Naive thymus-derived CD4-positive, alpha-beta T cell (primary cell): ENCODE measurements at regions of chr19 and their contacts with region 1.

Region 1: GRCh38 chr19:49676690-49677231 is 310 bp upstream of the PRMT1 start:
- DNase-seq: peak; percentile 84 to 99 (median 97)
- ATAC-seq: peak; percentile 87
- H3K4me3 ChIP-seq: peak overlapping the region; percentile 86
- H3K4me3 Mint-ChIP-seq: peak overlapping the region; percentile 91 to 100 (median 98)
- H3K27ac ChIP-seq: peak overlapping the region; percentile 95
- H3K27ac Mint-ChIP-seq: peak overlapping the region; percentile 93 to 100 (median 99)
- H3K4me1 ChIP-seq: peaks cover 18 to 23% of the 10 kb centered on the region in 2 donors
- H3K4me1 Mint-ChIP-seq: peaks cover 18 to 50% (median 43%) of the 10 kb centered on the region in 7 donors
- H3K27me3 ChIP-seq: no peaks in the 10 kb centered on the region
- H3K27me3 Mint-ChIP-seq: no peaks in the 10 kb centered on the region

Region 2: DNA sequence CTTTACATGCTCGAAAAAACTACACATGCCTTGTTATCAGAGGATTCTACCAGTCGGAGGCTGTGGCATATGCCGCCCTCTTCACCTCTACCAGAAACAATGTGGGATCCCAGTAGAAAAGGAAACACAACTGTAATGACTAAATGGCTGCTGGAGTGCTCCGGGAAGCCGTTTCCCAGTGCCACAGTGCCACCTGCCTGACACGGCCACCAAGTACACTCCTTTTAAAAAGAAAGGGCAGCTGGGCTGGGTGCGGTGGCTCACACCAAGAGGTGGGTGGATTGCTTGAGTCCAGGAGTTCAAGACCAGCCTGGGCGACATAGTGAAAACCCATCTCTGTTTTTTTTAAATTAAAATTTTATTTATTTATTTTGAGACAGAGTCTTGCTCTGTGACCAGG is 451.9 kb before region 1 on chr19:
- CTCF ChIA-PET with region 1: interaction called, 7 read pairs
- POLR2A ChIA-PET with region 1: no interaction called
- intact Hi-C with region 1: loop called in 1 of 2 experiments (anchors 1 kb)
- DNase-seq: peak in 3 of 9 donors; percentile 15 to 33 (median 24)
- ATAC-seq: peak; percentile 56
- H3K4me3 ChIP-seq: no peak overlapping the region
- H3K4me3 Mint-ChIP-seq: no peak overlapping the region
- H3K27ac ChIP-seq: no peak overlapping the region
- H3K27ac Mint-ChIP-seq: no peak overlapping the region
- H3K4me1 ChIP-seq: peaks cover 4 to 9% of the 10 kb centered on the region in 2 donors
- H3K4me1 Mint-ChIP-seq: peaks cover 5 to 7% (median 6%) of the 10 kb centered on the region in 7 donors
- H3K27me3 ChIP-seq: no peaks in the 10 kb centered on the region
- H3K27me3 Mint-ChIP-seq: peaks cover 2 to 6% (median 4%) of the 10 kb centered on the region in 5 donors

Region 3: GRCh38 chr19:49443366-49444099 is 233.2 kb before region 1 on chr19:
- CTCF ChIA-PET with region 1: interaction called, 6 read pairs
- POLR2A ChIA-PET with region 1: interaction called, 3 read pairs
- intact Hi-C with region 1: loop called in 1 of 2 experiments (anchors 1 kb)
- DNase-seq: peak; percentile 90 to 98 (median 95)
- ATAC-seq: peak; percentile 96
- H3K4me3 ChIP-seq: peak overlapping the region; percentile 57
- H3K4me3 Mint-ChIP-seq: peak overlapping the region; percentile 75 to 88 (median 83)
- H3K27ac ChIP-seq: peak overlapping the region; percentile 51
- H3K27ac Mint-ChIP-seq: peak overlapping the region; percentile 59 to 91 (median 83)
- H3K4me1 ChIP-seq: peaks cover 12 to 15% of the 10 kb centered on the region in 2 donors
- H3K4me1 Mint-ChIP-seq: peaks cover 29 to 54% (median 37%) of the 10 kb centered on the region in 7 donors
- H3K27me3 ChIP-seq: peaks cover 23 to 32% of the 10 kb centered on the region in 2 donors
- H3K27me3 Mint-ChIP-seq: peaks cover 36 to 48% (median 39%) of the 10 kb centered on the region in 5 donors

Region 4: DNA sequence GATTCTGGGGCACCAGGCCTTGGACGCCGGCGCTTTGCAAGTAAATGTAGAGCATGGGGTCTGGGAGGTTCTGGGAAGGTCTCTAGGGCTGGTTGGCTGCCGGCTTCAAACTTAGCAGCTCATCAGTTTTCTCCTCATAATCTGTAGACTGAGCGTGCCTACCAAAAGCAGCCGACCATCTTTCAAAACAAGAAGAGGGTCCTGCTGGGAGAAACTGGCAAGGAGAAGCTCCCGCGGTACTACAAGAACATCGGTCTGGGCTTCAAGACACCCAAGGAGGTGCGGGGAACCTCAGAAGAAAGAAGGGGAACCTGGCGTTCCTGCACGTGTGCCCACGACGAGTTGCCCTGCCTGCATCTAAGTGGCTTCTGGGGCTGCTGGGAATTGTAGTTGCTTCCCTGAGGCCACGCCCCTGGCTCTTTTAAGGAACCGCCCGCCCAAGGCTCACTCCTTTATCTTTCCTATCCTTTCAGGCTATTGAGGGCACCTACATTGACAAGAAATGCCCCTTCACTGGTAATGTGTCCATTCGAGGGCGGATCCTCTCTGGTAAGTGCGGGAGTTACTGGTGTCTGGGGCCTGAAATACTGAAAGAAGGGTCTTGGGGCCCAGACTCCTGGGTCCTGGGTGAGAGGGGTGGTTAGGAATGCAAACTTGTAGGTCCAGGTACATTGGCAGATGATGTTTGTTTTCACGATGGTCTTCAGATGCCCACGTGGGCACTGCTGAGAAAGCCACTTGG is 179.5 kb before region 1 on chr19:
- CTCF ChIA-PET with region 1: interaction called, 4 read pairs
- POLR2A ChIA-PET with region 1: interaction called, 14 read pairs
- intact Hi-C with region 1: loop called in 1 of 2 experiments (anchors 2 kb)
- DNase-seq: peak; percentile 55 to 85 (median 77)
- ATAC-seq: peak; percentile 20
- H3K4me3 ChIP-seq: peak overlapping the region; percentile 97
- H3K4me3 Mint-ChIP-seq: peak overlapping the region; percentile 96 to 100 (median 99)
- H3K27ac ChIP-seq: peak overlapping the region; percentile 99
- H3K27ac Mint-ChIP-seq: peak overlapping the region; percentile 91 to 100 (median 98)
- H3K4me1 ChIP-seq: peaks cover 21 to 40% of the 10 kb centered on the region in 2 donors
- H3K4me1 Mint-ChIP-seq: peaks cover 32 to 64% (median 50%) of the 10 kb centered on the region in 7 donors
- H3K27me3 ChIP-seq: no peaks in the 10 kb centered on the region
- H3K27me3 Mint-ChIP-seq: peaks cover 0 to 12% (median 0%) of the 10 kb centered on the region in 5 donors

Region 5: DNA sequence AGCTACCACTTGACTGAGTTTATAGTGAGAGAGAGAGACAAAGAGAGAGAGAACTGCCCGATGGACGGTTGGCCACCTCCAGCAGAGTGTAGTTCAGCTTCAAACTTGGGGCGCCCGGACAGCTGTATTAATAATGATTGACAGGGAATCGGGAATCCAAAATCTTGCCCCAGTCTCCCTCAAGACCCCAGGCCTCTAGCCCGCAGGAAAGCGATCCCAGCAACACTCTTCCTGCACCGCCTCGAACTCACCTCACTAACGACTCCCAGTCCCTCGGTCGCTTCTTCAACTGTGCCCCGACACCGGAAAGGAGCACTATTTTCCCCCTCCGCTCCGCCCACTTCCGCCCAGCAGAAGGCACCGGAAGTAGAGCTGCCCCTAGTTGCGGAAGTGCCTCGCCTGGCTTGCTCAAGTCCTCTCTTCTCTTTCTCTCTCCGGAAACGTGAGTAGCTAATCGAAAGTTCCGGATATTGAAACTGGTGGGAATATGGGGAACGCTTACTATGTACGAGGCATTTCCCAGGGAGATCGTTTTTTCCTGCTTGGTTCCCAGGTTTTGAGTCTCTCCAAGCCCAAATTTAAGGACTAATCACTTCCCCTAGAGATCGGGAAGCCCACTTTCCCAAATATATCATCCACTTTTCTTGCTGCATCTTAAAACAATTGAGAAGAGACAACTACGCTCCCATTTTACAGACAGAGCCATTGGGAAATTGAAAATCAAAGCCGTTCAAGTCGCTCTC is 96.3 kb before region 1 on chr19 and contains the start of gene NOSIP:
- CTCF ChIA-PET with region 1: no interaction called
- POLR2A ChIA-PET with region 1: interaction called, 10 read pairs
- intact Hi-C with region 1: loop called in 1 of 2 experiments (anchors 1 kb)
- DNase-seq: peak; percentile 88 to 96 (median 94)
- ATAC-seq: peak; percentile 100
- H3K4me3 ChIP-seq: peak within 1 kb of the TSS; percentile 68
- H3K4me3 Mint-ChIP-seq: peak within 1 kb of the TSS; percentile 91 to 98 (median 94)
- H3K27ac ChIP-seq: peak within 1 kb of the TSS; percentile 84
- H3K27ac Mint-ChIP-seq: peak within 1 kb of the TSS; percentile 85 to 98 (median 92)
- H3K4me1 ChIP-seq: peaks cover 0 to 22% of the 10 kb centered on the region in 2 donors
- H3K4me1 Mint-ChIP-seq: peaks cover 20 to 49% (median 36%) of the 10 kb centered on the region in 7 donors
- H3K27me3 ChIP-seq: no peaks in the 10 kb centered on the region
- H3K27me3 Mint-ChIP-seq: no peaks in the 10 kb centered on the region
- total RNA-seq, gene NOSIP: 222 to 267 (median 228) TPM

Region 6: DNA sequence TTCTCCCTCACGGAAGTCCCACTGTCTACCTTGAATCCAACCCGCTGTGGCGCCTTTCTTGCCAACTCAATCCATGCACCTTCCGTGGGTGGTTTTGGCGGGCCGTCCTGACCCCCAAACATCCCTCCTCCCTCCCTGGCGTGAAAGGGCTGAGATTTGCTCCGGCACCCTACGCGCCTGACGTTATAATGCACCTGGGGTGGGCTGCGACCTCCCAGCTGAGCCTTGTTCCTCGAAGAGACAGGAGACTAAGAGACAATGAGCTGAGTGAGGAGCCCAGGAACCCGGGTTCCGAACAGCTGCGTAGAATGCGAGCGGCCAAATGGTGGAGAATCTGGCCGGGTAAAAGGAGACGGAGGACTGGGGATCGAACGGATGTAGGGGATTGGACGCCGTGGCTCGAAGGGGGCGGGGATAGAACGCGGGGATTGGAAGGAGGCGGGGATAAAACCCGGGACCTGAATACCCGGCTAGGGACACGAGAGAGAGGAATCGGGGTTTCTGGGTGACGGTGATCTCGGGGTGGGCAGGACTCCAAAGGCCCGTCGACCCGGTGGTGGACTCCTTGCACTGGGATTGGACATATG is 14.0 kb after region 1 on chr19 and contains the start of gene CPT1C:
- CTCF ChIA-PET with region 1: interaction called, 7 read pairs
- POLR2A ChIA-PET with region 1: interaction called, 4 read pairs
- intact Hi-C with region 1: loop called in 1 of 2 experiments (anchors 1 kb)
- DNase-seq: peak in 7 of 9 donors; percentile 31 to 65 (median 46)
- ATAC-seq: peak; percentile 71
- H3K4me3 ChIP-seq: peak within 1 kb of the TSS; percentile 45
- H3K4me3 Mint-ChIP-seq: peak within 1 kb of the TSS; percentile 82 to 98 (median 86)
- H3K27ac ChIP-seq: peak within 1 kb of the TSS; percentile 44
- H3K27ac Mint-ChIP-seq: peak within 1 kb of the TSS; percentile 6 to 84 (median 45)
- H3K4me1 ChIP-seq: peaks cover 4 to 12% of the 10 kb centered on the region in 2 donors
- H3K4me1 Mint-ChIP-seq: peaks cover 19 to 38% (median 25%) of the 10 kb centered on the region in 7 donors
- H3K27me3 ChIP-seq: no peaks in the 10 kb centered on the region
- H3K27me3 Mint-ChIP-seq: peaks cover 5 to 15% (median 9%) of the 10 kb centered on the region in 5 donors
- total RNA-seq, gene CPT1C: 0.96 to 6.0 (median 1.5) TPM

Region 7: GRCh38 chr19:49869441-49870176 is 192.8 kb after region 1 on chr19:
- CTCF ChIA-PET with region 1: interaction called, 4 read pairs
- POLR2A ChIA-PET with region 1: interaction called, 3 read pairs
- intact Hi-C with region 1: loop called in 1 of 2 experiments (anchors 2 kb)
- DNase-seq: peak; percentile 83 to 94 (median 87)
- ATAC-seq: peak; percentile 87
- H3K4me3 ChIP-seq: peak overlapping the region; percentile 58
- H3K4me3 Mint-ChIP-seq: peak overlapping the region in 2 of 10 donors; percentile 87
- H3K27ac ChIP-seq: peak overlapping the region; percentile 72
- H3K27ac Mint-ChIP-seq: peak overlapping the region in 5 of 9 donors; percentile 59 to 87 (median 74)
- H3K4me1 ChIP-seq: peaks cover 31 to 38% of the 10 kb centered on the region in 2 donors
- H3K4me1 Mint-ChIP-seq: peaks cover 25 to 51% (median 45%) of the 10 kb centered on the region in 7 donors
- H3K27me3 ChIP-seq: no peaks in the 10 kb centered on the region
- H3K27me3 Mint-ChIP-seq: no peaks in the 10 kb centered on the region